Colonic mucosa (tissue), 4 donors: ENCODE measurements at regions of chr16 and their contacts with region 1.

Region 1: GRCh38 chr16:31713071-31713944 is 160.3 kb upstream of the ZNF267 start:
- DNase-seq: peak; percentile 95
- H3K4me3 ChIP-seq: peak overlapping the region; percentile 81
- H3K27ac ChIP-seq: peak overlapping the region; percentile 83
- H3K4me1 ChIP-seq: peaks cover 5% of the 10 kb centered on the region
- H3K27me3 ChIP-seq: no peaks in the 10 kb centered on the region
- CTCF ChIP-seq: no peak

Region 2: DNA sequence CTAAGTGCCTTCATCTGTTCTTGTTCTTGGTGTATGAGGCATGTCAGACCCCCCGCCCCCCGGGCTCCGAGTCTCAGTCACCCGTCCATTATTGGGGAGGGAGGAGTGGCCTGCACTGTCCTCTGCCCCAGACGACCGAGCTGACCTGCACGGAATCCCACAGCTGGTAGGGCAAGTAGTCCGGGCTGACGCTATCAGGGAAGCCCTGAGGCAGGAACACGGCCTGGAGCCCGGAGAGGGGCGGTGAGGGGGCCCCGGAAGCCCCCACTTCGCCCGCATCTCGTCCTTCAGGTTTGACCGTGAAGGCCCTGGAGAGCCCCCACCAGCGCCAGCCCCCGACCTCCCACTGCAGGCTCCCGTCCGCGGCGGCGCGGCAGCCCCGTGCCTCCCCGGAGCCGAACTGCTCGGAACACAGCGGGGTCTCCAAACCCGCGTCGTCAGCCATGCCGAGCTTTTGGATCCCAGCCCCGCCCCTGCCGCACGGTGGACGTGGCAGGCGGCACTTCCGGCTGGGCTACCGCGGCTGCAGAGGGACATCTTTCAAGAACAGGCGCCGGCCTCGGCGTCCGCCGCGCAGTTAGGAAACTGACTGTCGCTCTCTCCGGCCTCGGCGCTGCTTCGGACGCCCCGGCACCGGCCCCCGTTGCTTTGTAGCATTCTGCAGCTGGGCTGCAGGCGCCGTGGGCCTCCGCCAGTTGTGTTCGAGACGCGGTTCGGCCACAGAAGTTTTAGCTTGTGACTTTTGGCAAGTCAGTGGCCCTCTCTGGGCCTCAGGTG is 205.2 kb before region 1 on chr16 and contains the start of gene RUSF1:
- intact Hi-C with region 1: loop called (anchors 10 kb)
- DNase-seq: peak; percentile 93
- H3K4me3 ChIP-seq: peak within 1 kb of the TSS; percentile 96
- H3K27ac ChIP-seq: peak within 1 kb of the TSS; percentile 89
- H3K4me1 ChIP-seq: peaks cover 7% of the 10 kb centered on the region
- H3K27me3 ChIP-seq: no peaks in the 10 kb centered on the region
- CTCF ChIP-seq: no peak
- total RNA-seq, gene RUSF1: 53.3 to 78.1 TPM

Region 3: GRCh38 chr16:31868691-31869167 is 155.4 kb after region 1 on chr16:
- intact Hi-C with region 1: loop called (anchors 10 kb)
- DNase-seq: peak; percentile 88
- H3K4me3 ChIP-seq: no peak overlapping the region
- H3K27ac ChIP-seq: peak overlapping the region; percentile 1
- H3K4me1 ChIP-seq: no peaks in the 10 kb centered on the region
- H3K27me3 ChIP-seq: no peaks in the 10 kb centered on the region
- CTCF ChIP-seq: peak; percentile 80